Dorsolateral prefrontal cortex (tissue), 120 donors: ENCODE measurements at regions of chr17 and their contacts with region 1.

Region 1: GRCh38 chr17:77957857-77958715 is at the start of gene TNRC6C:
- DNase-seq: peak; percentile 100
- H3K4me3 ChIP-seq: peak within 1 kb of the TSS; percentile 59 to 90 (median 79)
- H3K27ac ChIP-seq: peak within 1 kb of the TSS; percentile 72 to 99 (median 96)
- H3K27me3 ChIP-seq: no peaks in the 10 kb centered on the region
- CTCF ChIP-seq: peak in 23 of 56 donors; percentile 7 to 53 (median 23)
- total RNA-seq, gene TNRC6C: 57.8 to 136 (median 94.4) TPM

Region 2: GRCh38 chr17:77734341-77735080 is 223.6 kb before region 1 on chr17:
- intact Hi-C with region 1: loop called in 1 of 2 experiments (anchors 10 kb)
- DNase-seq: peak; percentile 66 to 93 (median 88)
- H3K4me3 ChIP-seq: peak overlapping the region in 46 of 59 donors; percentile 3 to 55 (median 30)
- H3K27ac ChIP-seq: peak overlapping the region; percentile 55 to 97 (median 86)
- H3K27me3 ChIP-seq: peaks cover 0 to 14% (median 0%) of the 10 kb centered on the region in 45 donors
- CTCF ChIP-seq: peak in 47 of 56 donors; percentile 8 to 69 (median 41)

Region 3: DNA sequence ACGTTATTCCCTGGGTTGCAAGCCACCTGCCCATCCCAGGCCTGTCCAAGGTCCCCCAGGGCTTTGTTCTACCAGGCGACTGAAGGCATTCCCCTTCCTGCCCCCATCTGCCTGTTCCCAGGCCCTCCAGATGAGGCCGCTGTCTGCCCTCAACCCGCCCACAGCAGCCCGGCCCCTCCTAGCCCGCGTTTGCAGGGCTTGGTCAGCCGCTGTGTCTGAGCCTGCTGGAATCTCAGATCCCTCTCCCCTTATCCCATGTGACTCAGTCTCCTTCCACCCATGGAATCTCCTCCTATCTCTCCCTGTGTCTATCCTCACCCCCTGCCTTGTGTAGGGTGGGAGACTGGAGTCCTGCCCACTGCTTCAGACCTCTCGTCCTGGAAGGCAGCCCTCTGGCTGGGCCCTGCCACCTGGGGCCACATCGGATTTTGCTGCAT is 185.6 kb before region 1 on chr17:
- intact Hi-C with region 1: loop called in 1 of 2 experiments (anchors 10 kb)
- DNase-seq: no peak
- H3K4me3 ChIP-seq: no peak overlapping the region
- H3K27ac ChIP-seq: no peak overlapping the region
- H3K27me3 ChIP-seq: no peaks in the 10 kb centered on the region
- CTCF ChIP-seq: peak in 39 of 56 donors; percentile 16 to 58 (median 35)

Region 4: GRCh38 chr17:77778636-77779489 is 179.2 kb before region 1 on chr17:
- intact Hi-C with region 1: loop called (anchors 1 to 10 kb)
- DNase-seq: peak; percentile 73 to 96 (median 92)
- H3K4me3 ChIP-seq: peak overlapping the region in 50 of 59 donors; percentile 5 to 57 (median 32)
- H3K27ac ChIP-seq: peak overlapping the region; percentile 19 to 91 (median 83)
- H3K27me3 ChIP-seq: no peaks in the 10 kb centered on the region
- CTCF ChIP-seq: peak in 12 of 56 donors; percentile 7 to 30 (median 19)

Region 5: GRCh38 chr17:77881545-77881944 is 76.5 kb before region 1 on chr17:
- intact Hi-C with region 1: loop called (anchors 2 to 5 kb)
- DNase-seq: peak in 5 of 10 donors; percentile 36 to 61 (median 42)
- H3K4me3 ChIP-seq: no peak overlapping the region
- H3K27ac ChIP-seq: peak overlapping the region in 48 of 59 donors; percentile 4 to 92 (median 80)
- H3K27me3 ChIP-seq: no peaks in the 10 kb centered on the region
- CTCF ChIP-seq: no peak

Region 6: GRCh38 chr17:77887464-77888241 is 70.4 kb before region 1 on chr17:
- intact Hi-C with region 1: loop called (anchors 2 to 5 kb)
- DNase-seq: peak in 9 of 10 donors; percentile 53 to 77 (median 67)
- H3K4me3 ChIP-seq: peak overlapping the region; percentile 36 to 89 (median 68)
- H3K27ac ChIP-seq: peak overlapping the region; percentile 12 to 93 (median 85)
- H3K27me3 ChIP-seq: no peaks in the 10 kb centered on the region
- CTCF ChIP-seq: peak in 6 of 56 donors; percentile 8 to 30 (median 18)

Region 7: GRCh38 chr17:77942112-77942988 is 15.7 kb before region 1 on chr17:
- intact Hi-C with region 1: loop called in 1 of 2 experiments (anchors 2 kb)
- DNase-seq: peak; percentile 18 to 91 (median 82)
- H3K4me3 ChIP-seq: peak overlapping the region in 40 of 59 donors; percentile 2 to 59 (median 29)
- H3K27ac ChIP-seq: peak overlapping the region; percentile 79 to 100 (median 98)
- H3K27me3 ChIP-seq: peaks cover 0 to 3% (median 0%) of the 10 kb centered on the region in 45 donors
- CTCF ChIP-seq: peak in 5 of 56 donors; percentile 6 to 38 (median 17)